Vagina (tissue), 2 donors: ENCODE measurements at regions of chr7 and their contacts with region 1.

Region 1: DNA sequence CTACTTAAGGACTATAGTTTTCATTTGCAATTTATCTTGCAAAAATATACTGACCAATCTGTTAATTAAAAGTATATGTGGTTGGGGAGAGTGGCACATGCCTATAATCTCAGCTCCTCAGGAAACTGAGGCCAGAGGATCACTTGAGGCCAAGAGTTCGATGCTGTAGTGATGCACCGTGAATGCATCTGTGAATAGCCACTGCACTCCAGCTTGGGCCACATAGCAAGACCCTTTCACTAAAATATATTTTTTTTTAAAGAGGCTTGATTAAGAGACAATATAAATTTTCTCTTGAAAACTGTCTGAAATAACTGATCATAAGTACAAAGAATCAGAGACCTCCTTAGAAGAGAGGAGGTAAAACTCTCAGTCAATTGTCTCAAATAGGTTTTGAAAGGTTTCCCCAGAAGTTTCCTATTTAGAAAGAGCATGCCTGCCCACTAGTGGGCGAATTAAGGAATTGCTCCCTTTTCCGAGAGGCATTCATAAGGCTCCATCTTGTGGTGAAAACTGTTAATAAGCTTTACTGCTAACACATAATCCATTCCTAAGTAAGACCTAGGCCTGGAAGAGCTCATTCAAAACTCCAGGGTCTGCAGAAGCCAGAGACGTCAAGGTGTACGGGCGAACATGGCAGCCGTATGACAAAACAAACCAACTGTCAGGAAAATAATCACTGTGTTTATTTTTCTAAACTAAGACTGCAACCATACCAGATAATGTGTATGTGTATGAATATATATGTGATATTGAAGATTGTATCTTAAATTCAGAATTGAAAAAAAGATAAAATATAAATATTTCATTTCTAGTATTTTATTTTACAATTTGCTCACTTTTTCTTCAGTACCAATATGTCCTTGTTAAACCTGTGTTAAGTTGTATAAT is 6.8 kb upstream of the TAS2R40 start:
- DNase-seq: no peak
- H3K4me3 ChIP-seq: no peak overlapping the region
- H3K27ac ChIP-seq: no peak overlapping the region
- H3K4me1 ChIP-seq: no peaks in the 10 kb centered on the region
- H3K27me3 ChIP-seq: no peaks in the 10 kb centered on the region
- CTCF ChIP-seq: peak; percentile 95 to 100 (median 100)
- POLR2A ChIP-seq: no peak

Region 2: DNA sequence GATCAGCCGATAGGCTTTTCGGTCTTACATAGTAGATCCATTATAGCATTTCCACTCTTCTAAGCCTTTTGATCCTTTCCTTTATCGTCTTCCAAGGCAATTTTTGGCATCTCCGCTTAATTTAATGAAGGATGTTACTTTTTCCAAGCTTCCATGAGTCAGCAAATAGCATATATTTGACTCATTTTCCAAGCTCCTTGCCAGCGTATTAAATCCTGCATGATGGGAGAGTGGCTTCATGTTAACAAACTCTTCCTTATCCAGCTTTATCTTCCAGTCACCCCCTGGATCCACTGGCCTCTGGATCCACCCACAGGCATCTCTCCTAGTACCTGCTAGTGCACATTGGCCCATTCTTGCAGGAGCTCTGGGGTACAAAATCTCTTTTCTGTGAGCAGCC is 201.1 kb before region 1 on chr7:
- intact Hi-C with region 1: loop called (anchors 5 kb)
- DNase-seq: no peak
- H3K4me3 ChIP-seq: no peak overlapping the region
- H3K27ac ChIP-seq: peak overlapping the region; percentile 54
- H3K4me1 ChIP-seq: peaks cover 26% of the 10 kb centered on the region
- H3K27me3 ChIP-seq: no peaks in the 10 kb centered on the region
- CTCF ChIP-seq: no peak
- POLR2A ChIP-seq: no peak

Region 3: GRCh38 chr7:143126140-143126539 is 88.9 kb before region 1 on chr7:
- intact Hi-C with region 1: no loop called
- DNase-seq: no peak
- H3K4me3 ChIP-seq: no peak overlapping the region
- H3K27ac ChIP-seq: no peak overlapping the region
- H3K4me1 ChIP-seq: no peaks in the 10 kb centered on the region
- H3K27me3 ChIP-seq: no peaks in the 10 kb centered on the region
- CTCF ChIP-seq: no peak
- POLR2A ChIP-seq: no peak

Region 4: GRCh38 chr7:144085978-144086377 is 870.9 kb after region 1 on chr7 and contains the start of gene OR2A12:
- intact Hi-C with region 1: no loop called
- DNase-seq: no peak
- H3K4me3 ChIP-seq: no peak within 1 kb of the TSS
- H3K27ac ChIP-seq: no peak within 1 kb of the TSS
- H3K4me1 ChIP-seq: no peaks in the 10 kb centered on the region
- H3K27me3 ChIP-seq: no peaks in the 10 kb centered on the region
- CTCF ChIP-seq: no peak
- POLR2A ChIP-seq: no peak
- total RNA-seq, gene OR2A12: not detected